Endothelial cell of umbilical vein (primary cell): ENCODE measurements at regions of chr2 and their contacts with region 1.

Region 1: DNA sequence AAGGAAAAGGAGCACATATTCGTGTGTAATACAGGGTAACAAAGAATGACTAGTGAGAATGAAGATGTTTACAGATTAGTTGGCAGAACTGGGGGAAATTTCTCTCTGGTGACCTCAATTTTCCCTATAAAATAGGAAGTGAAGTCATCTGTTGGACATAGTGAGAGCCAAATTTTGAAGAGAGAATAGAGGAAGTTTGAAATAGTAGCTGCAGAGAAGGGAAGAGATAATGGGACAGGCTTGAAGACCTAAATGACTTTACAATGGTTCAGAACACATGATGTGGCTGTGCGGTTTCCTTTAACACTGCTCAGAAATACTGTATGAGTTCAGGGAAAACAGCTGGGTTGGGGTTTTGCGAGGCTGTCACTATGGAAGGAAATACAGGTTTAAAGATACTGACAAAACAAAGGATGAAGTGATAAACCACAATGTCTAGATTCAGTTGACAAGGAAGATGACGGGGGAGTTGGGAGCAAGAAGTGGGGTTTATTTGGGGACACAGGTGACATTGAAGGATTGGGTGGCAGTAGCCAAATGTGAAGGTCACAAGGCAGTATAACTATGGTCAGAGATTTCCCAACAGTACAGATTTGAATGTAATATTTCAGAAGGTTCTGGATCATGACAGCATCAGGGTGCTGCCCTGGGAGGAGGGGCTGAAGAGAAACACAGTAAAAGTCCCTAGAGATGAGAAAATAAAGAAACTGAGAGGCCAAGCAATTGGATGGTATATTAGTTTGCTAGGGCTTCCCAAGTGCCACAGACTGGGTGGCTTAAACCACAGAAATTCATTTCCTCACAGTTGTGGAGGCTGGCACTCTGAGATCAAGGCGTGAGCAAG is 82.6 kb upstream of the TANK start:
- DNase-seq: peak; percentile 99
- H3K4me3 ChIP-seq: no peak overlapping the region
- H3K27ac ChIP-seq: peak overlapping the region; percentile 99
- H3K4me1 ChIP-seq: peaks cover 37% of the 10 kb centered on the region
- H3K27me3 ChIP-seq: no peaks in the 10 kb centered on the region
- CTCF ChIP-seq: no peak
- POLR2A ChIP-seq: no peak

Region 2: DNA sequence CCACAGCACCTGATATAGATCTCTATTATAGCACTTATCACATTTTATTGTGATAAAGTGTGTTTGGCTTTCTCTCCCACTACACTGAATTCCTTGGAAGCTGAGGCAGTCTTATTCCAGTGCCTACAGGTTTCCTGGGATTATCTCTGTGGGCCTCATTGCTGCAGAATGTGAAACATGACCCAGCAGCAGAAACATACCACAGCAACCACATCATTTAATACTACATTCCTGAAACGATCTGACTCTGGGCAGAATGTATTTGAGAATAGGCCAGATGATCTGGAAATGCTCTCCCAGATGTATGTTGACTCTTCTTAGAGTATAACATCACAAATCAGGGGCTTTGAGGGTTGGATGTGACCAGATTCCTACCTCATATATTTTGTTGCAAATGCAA is 240.8 kb before region 1 on chr2:
- CTCF ChIA-PET with region 1: no interaction called
- POLR2A ChIA-PET with region 1: no interaction called
- dilution Hi-C with region 1: no loop called
- intact Hi-C with region 1: no loop called
- DNase-seq: no peak
- H3K4me3 ChIP-seq: no peak overlapping the region
- H3K27ac ChIP-seq: no peak overlapping the region
- H3K4me1 ChIP-seq: no peaks in the 10 kb centered on the region
- H3K27me3 ChIP-seq: peaks cover 0 to 4% of the 10 kb centered on the region in 2 experiments
- CTCF ChIP-seq: no peak
- POLR2A ChIP-seq: no peak

Region 3: GRCh38 chr2:161104054-161104553 is 26.5 kb after region 1 on chr2:
- CTCF ChIA-PET with region 1: no interaction called
- POLR2A ChIA-PET with region 1: no interaction called
- dilution Hi-C with region 1: no loop called
- intact Hi-C with region 1: loop called (anchors 2 kb)
- DNase-seq: no peak
- H3K4me3 ChIP-seq: no peak overlapping the region
- H3K27ac ChIP-seq: no peak overlapping the region
- H3K4me1 ChIP-seq: peaks cover 22% of the 10 kb centered on the region
- H3K27me3 ChIP-seq: no peaks in the 10 kb centered on the region
- CTCF ChIP-seq: no peak
- POLR2A ChIP-seq: no peak

Region 4: DNA sequence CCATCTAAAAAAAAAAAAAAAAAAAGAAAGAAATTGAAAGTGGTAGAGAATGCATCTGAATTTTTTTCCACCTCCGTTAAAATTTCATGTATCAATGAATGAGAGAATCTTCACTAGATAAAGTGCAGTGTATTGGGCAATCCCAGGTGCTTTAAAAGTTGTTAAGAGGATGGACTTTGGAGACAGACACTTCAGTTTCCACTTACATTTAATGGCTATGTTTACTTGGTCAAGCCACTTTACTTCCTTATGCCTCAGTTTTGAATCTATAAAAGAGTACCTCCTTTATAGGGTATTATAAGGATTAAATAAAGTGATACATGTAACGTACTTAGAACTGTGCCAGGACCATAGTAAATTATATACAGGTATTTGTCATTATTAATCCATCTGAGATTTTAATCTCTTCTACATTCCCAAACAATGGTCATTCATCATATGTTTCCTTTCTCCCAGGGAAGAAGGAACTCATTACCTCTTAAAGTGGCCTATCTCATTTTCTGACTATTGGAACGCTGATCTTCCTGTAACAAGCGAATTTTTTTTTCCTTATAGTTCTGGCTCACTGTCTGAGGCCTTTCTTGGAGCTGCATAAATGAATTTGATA is 53.6 kb after region 1 on chr2:
- CTCF ChIA-PET with region 1: interaction called, 11 read pairs
- POLR2A ChIA-PET with region 1: interaction called, 7 read pairs
- dilution Hi-C with region 1: no loop called
- intact Hi-C with region 1: loop called (anchors 1 kb)
- DNase-seq: peak; percentile 54
- H3K4me3 ChIP-seq: no peak overlapping the region
- H3K27ac ChIP-seq: no peak overlapping the region
- H3K4me1 ChIP-seq: peaks cover 50% of the 10 kb centered on the region
- H3K27me3 ChIP-seq: no peaks in the 10 kb centered on the region
- CTCF ChIP-seq: no peak
- POLR2A ChIP-seq: no peak

Region 5: GRCh38 chr2:161160226-161161069 is 82.9 kb after region 1 on chr2 and contains the start of gene TANK:
- CTCF ChIA-PET with region 1: no interaction called
- POLR2A ChIA-PET with region 1: no interaction called
- dilution Hi-C with region 1: no loop called
- intact Hi-C with region 1: loop called (anchors 1 kb)
- DNase-seq: peak; percentile 84
- H3K4me3 ChIP-seq: peak within 1 kb of the TSS; percentile 30 to 89 (median 50)
- H3K27ac ChIP-seq: peak within 1 kb of the TSS; percentile 75
- H3K4me1 ChIP-seq: peaks cover 18% of the 10 kb centered on the region
- H3K27me3 ChIP-seq: no peaks in the 10 kb centered on the region
- CTCF ChIP-seq: no peak
- POLR2A ChIP-seq: peak; percentile 90
- total RNA-seq, gene TANK: 83.2 and 88.2 TPM in 2 replicates